A673 (cell line): ENCODE measurements at regions of chr4 and their contacts with region 1.

Region 1: GRCh38 chr4:113278324-113278934 is 229.0 kb downstream of the ANK2 start:
- DNase-seq: peak; percentile 88
- H3K4me3 ChIP-seq: no peak overlapping the region
- H3K27ac ChIP-seq: no peak overlapping the region
- H3K4me1 ChIP-seq: no peaks in the 10 kb centered on the region
- H3K27me3 ChIP-seq: no peaks in the 10 kb centered on the region
- CTCF ChIP-seq: peak; percentile 95

Region 2: DNA sequence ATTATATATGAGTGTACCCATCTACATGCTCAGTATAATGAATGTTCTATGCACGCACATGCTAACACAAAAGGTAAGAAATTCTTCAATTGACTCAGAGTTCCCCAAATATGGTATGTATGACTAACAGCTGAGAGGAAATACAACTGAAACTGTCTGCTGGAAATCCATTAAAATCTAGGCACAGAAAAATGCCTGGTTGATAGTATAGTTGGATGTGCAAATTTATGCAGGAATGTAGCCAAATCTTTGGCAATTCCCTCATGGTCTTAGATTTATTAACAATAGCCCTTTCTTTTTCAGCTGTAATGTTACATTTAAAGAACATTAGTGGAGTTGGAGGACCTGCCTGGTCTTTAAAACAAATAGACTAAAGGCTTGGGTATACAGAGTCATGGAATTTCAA is 477.6 kb after region 1 on chr4:
- CTCF ChIA-PET with region 1: no interaction called
- POLR2A ChIA-PET with region 1: no interaction called
- intact Hi-C with region 1: loop called (anchors 5 kb)
- DNase-seq: peak; percentile 95
- H3K4me3 ChIP-seq: no peak overlapping the region
- H3K27ac ChIP-seq: peak overlapping the region; percentile 52
- H3K4me1 ChIP-seq: peaks cover 37% of the 10 kb centered on the region
- H3K27me3 ChIP-seq: no peaks in the 10 kb centered on the region
- CTCF ChIP-seq: no peak

Region 3: DNA sequence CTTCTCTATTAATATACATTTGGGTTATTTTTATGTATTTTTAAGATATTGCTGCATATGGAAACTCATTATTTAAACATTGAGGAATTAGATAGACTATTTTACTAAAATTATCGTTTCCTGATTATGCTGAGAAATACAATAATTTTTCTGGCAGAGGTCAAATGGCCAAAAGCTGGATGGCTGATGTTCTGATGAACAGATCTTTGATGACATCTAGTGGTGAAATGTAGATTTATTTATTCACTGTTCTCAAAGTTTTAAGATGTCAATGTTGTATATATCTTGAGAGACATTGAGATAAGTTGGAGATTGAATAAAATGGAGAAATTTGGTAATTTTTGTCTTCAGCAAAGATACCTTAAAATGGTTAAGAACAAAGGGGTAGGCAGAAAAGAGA is 1416.3 kb after region 1 on chr4:
- CTCF ChIA-PET with region 1: no interaction called
- POLR2A ChIA-PET with region 1: no interaction called
- intact Hi-C with region 1: loop called (anchors 10 kb)
- DNase-seq: peak; percentile 51
- H3K4me3 ChIP-seq: no peak overlapping the region
- H3K27ac ChIP-seq: no peak overlapping the region
- H3K4me1 ChIP-seq: peaks cover 6% of the 10 kb centered on the region
- H3K27me3 ChIP-seq: no peaks in the 10 kb centered on the region
- CTCF ChIP-seq: peak; percentile 66